Prostate gland (tissue), 2 donors: ENCODE measurements at regions of chr4 and their contacts with region 1.

Region 1: GRCh38 chr4:5979976-5980375 is 38.3 kb downstream of the C4orf50 start:
- DNase-seq: no peak
- H3K4me3 ChIP-seq: no peak overlapping the region
- H3K27ac ChIP-seq: no peak overlapping the region
- H3K4me1 ChIP-seq: no peaks in the 10 kb centered on the region
- H3K27me3 ChIP-seq: peaks cover 4% of the 10 kb centered on the region
- CTCF ChIP-seq: peak in 1 of 4 experiments; percentile 14
- POLR2A ChIP-seq: no peak

Region 2: GRCh38 chr4:5821665-5822358 is 158.2 kb before region 1 on chr4:
- intact Hi-C with region 1: loop called (anchors 2 kb)
- DNase-seq: no peak
- H3K4me3 ChIP-seq: no peak overlapping the region
- H3K27ac ChIP-seq: no peak overlapping the region
- H3K4me1 ChIP-seq: no peaks in the 10 kb centered on the region
- H3K27me3 ChIP-seq: no peaks in the 10 kb centered on the region
- CTCF ChIP-seq: peak in 2 of 4 experiments; percentile 23 to 45
- POLR2A ChIP-seq: no peak